ENCODE measurements at regions of chr15 and their contacts with region 1.

Region 1: DNA sequence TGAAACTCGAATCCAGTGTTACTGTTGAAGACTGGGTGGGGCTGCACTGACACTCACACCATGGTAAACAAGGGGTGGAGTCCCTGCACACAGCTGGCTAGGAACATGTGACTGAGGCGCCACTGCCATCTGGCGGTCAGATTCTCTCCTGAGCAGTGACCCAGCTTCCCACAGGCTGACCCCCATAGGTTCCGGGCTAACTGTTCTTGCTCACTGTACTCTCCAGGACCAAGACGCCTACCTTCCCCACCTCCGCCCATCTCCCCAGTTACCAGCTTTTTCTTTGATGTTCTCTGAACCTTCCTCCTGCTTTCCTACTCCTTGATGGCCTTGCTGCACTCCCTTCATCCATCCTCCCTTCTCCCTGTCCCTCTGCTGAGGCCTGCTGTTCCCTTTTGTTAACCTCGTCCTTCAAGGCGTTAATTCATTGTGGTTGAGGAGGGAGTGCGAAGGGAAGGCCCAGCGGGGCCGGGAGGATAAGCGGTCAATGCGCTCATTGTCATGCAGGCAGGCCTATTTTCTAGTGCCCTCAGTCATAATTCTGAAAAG is 115.2 kb downstream of the ATP8B4 start:
- DNase-seq: peak; percentile 87
- ATAC-seq: peak; percentile 98
- H3K4me3 ChIP-seq: no peak overlapping the region
- H3K27ac ChIP-seq: peak overlapping the region; percentile 70
- H3K4me1 ChIP-seq: peaks cover 11% of the 10 kb centered on the region
- H3K27me3 ChIP-seq: no peaks in the 10 kb centered on the region
- CTCF ChIP-seq: peak; percentile 88
- POLR2A ChIP-seq: no peak
- RAD21 ChIP-seq: peak; percentile 87

Region 2: GRCh38 chr15:49438962-49439631 is 564.8 kb before region 1 on chr15:
- CTCF ChIA-PET with region 1: interaction called, 3 read pairs
- POLR2A ChIA-PET with region 1: no interaction called
- dilution Hi-C with region 1: no loop called
- in situ Hi-C with region 1: no loop called
- intact Hi-C with region 1: loop called (anchors 5 kb)
- DNase-seq: no peak
- ATAC-seq: no peak; the same call in 1 of the 2 replicates
- H3K4me3 ChIP-seq: no peak overlapping the region
- H3K27ac ChIP-seq: peak overlapping the region; percentile 21
- H3K4me1 ChIP-seq: peaks cover 22% of the 10 kb centered on the region
- H3K27me3 ChIP-seq: no peaks in the 10 kb centered on the region
- CTCF ChIP-seq: no peak
- POLR2A ChIP-seq: no peak
- RAD21 ChIP-seq: no peak

Region 3: DNA sequence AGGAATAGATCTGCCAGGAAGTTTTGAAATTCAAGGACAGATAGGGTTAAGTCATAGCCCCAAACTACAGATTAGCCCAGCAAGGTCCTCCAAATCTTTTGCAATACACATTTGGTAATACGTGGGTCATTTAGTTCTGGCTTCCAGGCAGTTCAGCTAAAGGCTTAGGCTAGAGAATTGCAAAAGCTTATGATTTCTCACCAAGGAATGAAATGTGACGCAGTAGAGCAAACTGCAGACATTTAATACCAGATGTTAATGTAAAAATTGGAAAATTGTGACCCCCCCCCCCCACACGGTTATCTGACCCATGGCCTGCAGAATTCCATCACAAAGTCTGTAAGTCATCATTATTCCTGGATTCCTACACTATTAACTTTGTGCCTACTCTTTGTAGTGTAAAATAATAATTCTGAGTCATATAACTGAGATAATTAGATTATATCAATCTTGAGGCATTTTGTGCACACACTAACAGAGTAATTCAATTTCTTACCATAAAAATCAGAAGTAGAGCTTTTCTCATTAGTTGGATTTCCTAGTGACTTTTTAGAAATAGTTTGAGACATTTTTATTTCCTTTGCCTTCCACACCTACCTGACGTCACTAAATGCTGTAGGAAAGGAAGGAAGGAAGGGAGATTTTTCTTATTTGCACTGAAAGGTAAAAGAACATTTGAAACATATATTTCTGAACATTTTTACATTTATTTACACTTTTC is 147.8 kb before region 1 on chr15:
- CTCF ChIA-PET with region 1: no interaction called
- POLR2A ChIA-PET with region 1: no interaction called
- dilution Hi-C with region 1: no loop called
- in situ Hi-C with region 1: no loop called
- intact Hi-C with region 1: loop called (anchors 2 kb)
- DNase-seq: peak; percentile 99
- ATAC-seq: peak; percentile 74
- H3K4me3 ChIP-seq: no peak overlapping the region
- H3K27ac ChIP-seq: peak overlapping the region; percentile 100; the same call in 1 of the 2 replicates
- H3K4me1 ChIP-seq: peaks cover 24% of the 10 kb centered on the region
- H3K27me3 ChIP-seq: no peaks in the 10 kb centered on the region
- CTCF ChIP-seq: no peak
- POLR2A ChIP-seq: no peak
- RAD21 ChIP-seq: peak; percentile 17; the same call in 1 of the 2 replicates

Region 4: GRCh38 chr15:49979705-49980382 is 24.0 kb before region 1 on chr15:
- CTCF ChIA-PET with region 1: no interaction called
- POLR2A ChIA-PET with region 1: no interaction called
- dilution Hi-C with region 1: no loop called
- in situ Hi-C with region 1: no loop called
- intact Hi-C with region 1: no loop called
- DNase-seq: peak; percentile 64
- ATAC-seq: no peak
- H3K4me3 ChIP-seq: no peak overlapping the region
- H3K27ac ChIP-seq: peak overlapping the region; percentile 44; the same call in 1 of the 2 replicates
- H3K4me1 ChIP-seq: peaks cover 6% of the 10 kb centered on the region
- H3K27me3 ChIP-seq: no peaks in the 10 kb centered on the region
- CTCF ChIP-seq: no peak
- POLR2A ChIP-seq: no peak
- RAD21 ChIP-seq: no peak

Region 5: GRCh38 chr15:50134520-50135024 is 130.7 kb after region 1 on chr15:
- CTCF ChIA-PET with region 1: no interaction called
- POLR2A ChIA-PET with region 1: no interaction called
- dilution Hi-C with region 1: no loop called
- in situ Hi-C with region 1: no loop called
- intact Hi-C with region 1: loop called (anchors 5 kb)
- DNase-seq: peak; percentile 89
- ATAC-seq: peak; percentile 44
- H3K4me3 ChIP-seq: no peak overlapping the region
- H3K27ac ChIP-seq: peak overlapping the region; percentile 60
- H3K4me1 ChIP-seq: peaks cover 17% of the 10 kb centered on the region
- H3K27me3 ChIP-seq: no peaks in the 10 kb centered on the region
- CTCF ChIP-seq: no peak
- POLR2A ChIP-seq: no peak
- RAD21 ChIP-seq: no peak

Measured in IMR-90 (cell line).